SK-N-SH (cell line): ENCODE measurements at regions of chr17 and their contacts with region 1.

Region 1: GRCh38 chr17:35747540-35748017 is 5.5 kb downstream of the GAS2L2 start:
- DNase-seq: peak; percentile 89
- H3K4me3 ChIP-seq: no peak overlapping the region; a peak in 1 of 4 replicates
- H3K27ac ChIP-seq: no peak overlapping the region
- H3K4me1 ChIP-seq: peaks cover 0 to 15% of the 10 kb centered on the region in 2 experiments; a peak in 1 of 4 replicates
- H3K27me3 ChIP-seq: peaks cover 11% of the 10 kb centered on the region
- CTCF ChIP-seq: peak; percentile 83
- EP300 ChIP-seq: no peak
- RAD21 ChIP-seq: peak; percentile 98

Region 2: GRCh38 chr17:35568541-35568940 is 179.0 kb before region 1 on chr17:
- CTCF ChIA-PET with region 1: interaction called, 12 read pairs
- POLR2A ChIA-PET with region 1: no interaction called
- DNase-seq: peak; percentile 27
- H3K4me3 ChIP-seq: peak overlapping the region; percentile 67 to 82
- H3K27ac ChIP-seq: peak overlapping the region in 1 of 2 experiments; percentile 59; a peak in 2 of 4 replicates
- H3K4me1 ChIP-seq: peaks cover 0 to 10% of the 10 kb centered on the region in 2 experiments; a peak in 2 of 4 replicates
- H3K27me3 ChIP-seq: no peaks in the 10 kb centered on the region; the same call in 1 of the 2 replicates
- CTCF ChIP-seq: no peak
- EP300 ChIP-seq: no peak
- RAD21 ChIP-seq: no peak

Region 3: DNA sequence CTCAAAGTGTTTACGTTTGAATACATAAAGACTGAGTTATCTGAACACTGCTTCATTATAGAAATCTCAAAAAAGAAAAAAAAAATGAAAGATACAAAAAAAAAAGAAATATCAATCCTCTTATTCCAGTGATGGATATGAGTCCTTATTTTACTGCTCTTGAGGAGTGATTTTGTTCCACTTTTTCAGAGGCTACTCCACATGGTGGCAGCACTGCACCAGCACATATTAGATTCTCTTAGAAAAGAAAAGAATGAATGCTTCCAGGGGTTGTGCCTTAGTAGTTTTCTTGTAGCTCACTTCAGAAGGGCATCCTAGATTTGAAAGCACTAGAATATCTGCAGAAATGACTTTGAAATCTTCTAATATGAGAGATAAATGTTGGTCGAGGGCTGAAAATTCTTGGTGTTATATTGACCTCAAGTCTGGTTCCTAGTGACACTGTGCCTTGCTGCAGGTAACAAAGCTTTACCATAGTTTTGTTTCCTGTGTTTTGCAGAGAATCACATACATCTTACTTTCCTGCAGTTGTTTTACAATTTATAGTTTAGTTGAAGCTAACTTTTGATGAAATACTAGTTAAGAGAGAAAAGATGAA is 134.6 kb before region 1 on chr17:
- CTCF ChIA-PET with region 1: interaction called, 275 read pairs
- POLR2A ChIA-PET with region 1: interaction called, 7 read pairs
- DNase-seq: peak; percentile 52
- H3K4me3 ChIP-seq: no peak overlapping the region; a peak in 1 of 4 replicates
- H3K27ac ChIP-seq: no peak overlapping the region
- H3K4me1 ChIP-seq: no peaks in the 10 kb centered on the region
- H3K27me3 ChIP-seq: no peaks in the 10 kb centered on the region
- CTCF ChIP-seq: peak; percentile 85
- EP300 ChIP-seq: no peak
- RAD21 ChIP-seq: peak; percentile 75

Region 4: DNA sequence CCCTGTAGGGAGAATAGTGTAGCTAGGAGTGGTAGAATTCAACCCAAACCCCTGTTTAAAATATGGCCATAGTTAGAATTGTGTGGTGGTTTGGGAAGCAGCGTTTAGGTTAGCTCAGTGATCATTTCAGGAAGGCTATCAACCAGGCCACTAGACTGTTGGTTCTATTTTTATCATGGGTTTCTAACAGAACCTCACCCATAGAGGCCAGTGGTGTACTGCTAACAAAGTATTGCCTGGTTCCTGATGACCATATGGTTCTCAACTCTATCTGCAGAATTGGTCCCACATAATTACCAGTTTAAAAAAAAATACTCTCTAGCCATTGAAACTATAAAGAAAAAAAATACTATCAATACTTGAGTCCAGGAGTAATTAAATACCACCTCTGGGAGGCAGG is 86.7 kb before region 1 on chr17:
- CTCF ChIA-PET with region 1: interaction called, 21 read pairs
- POLR2A ChIA-PET with region 1: no interaction called
- DNase-seq: no peak
- H3K4me3 ChIP-seq: no peak overlapping the region
- H3K27ac ChIP-seq: no peak overlapping the region
- H3K4me1 ChIP-seq: no peaks in the 10 kb centered on the region
- H3K27me3 ChIP-seq: no peaks in the 10 kb centered on the region
- CTCF ChIP-seq: no peak
- EP300 ChIP-seq: no peak
- RAD21 ChIP-seq: no peak

Region 5: DNA sequence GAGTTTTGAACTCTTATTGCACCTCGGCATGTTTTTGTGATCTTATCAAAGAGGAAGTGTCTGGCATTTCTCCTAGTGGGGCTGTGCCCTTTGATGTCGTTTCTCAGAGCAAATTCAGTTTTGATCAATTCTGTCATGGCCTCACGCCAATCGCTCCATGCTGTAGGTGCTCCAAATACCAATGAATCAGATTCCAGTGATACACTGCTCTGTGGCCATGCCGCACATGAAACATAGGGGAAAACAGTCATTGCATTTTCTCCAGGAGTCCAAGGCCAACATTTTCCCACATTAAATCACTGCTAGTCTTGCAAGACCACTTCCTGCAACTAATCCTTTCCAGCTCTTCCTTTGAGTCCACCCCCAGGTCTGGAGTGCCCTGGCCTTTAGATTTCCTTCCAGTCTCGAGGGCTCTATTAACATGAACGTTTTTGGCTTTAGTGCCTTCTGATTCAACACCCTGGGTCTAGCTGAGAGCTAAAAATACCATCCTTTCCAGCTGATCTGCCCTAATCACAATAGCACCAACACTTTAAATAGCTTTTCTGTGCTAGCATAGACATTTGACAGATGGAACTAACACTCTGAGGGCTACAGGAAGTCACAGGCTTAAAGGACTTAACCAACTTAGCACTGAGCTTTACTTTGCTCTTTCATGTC is 34.4 kb before region 1 on chr17:
- CTCF ChIA-PET with region 1: interaction called, 28 read pairs
- POLR2A ChIA-PET with region 1: no interaction called
- DNase-seq: peak; percentile 39
- H3K4me3 ChIP-seq: no peak overlapping the region
- H3K27ac ChIP-seq: peak overlapping the region; percentile 79 to 93
- H3K4me1 ChIP-seq: peaks cover 25 to 37% of the 10 kb centered on the region in 2 experiments
- H3K27me3 ChIP-seq: no peaks in the 10 kb centered on the region
- CTCF ChIP-seq: no peak
- EP300 ChIP-seq: 0 out of 4 replicates have a peak, but pooled peaks of 1 of the 2 experiments have one; percentile 47
- RAD21 ChIP-seq: no peak

Region 6: DNA sequence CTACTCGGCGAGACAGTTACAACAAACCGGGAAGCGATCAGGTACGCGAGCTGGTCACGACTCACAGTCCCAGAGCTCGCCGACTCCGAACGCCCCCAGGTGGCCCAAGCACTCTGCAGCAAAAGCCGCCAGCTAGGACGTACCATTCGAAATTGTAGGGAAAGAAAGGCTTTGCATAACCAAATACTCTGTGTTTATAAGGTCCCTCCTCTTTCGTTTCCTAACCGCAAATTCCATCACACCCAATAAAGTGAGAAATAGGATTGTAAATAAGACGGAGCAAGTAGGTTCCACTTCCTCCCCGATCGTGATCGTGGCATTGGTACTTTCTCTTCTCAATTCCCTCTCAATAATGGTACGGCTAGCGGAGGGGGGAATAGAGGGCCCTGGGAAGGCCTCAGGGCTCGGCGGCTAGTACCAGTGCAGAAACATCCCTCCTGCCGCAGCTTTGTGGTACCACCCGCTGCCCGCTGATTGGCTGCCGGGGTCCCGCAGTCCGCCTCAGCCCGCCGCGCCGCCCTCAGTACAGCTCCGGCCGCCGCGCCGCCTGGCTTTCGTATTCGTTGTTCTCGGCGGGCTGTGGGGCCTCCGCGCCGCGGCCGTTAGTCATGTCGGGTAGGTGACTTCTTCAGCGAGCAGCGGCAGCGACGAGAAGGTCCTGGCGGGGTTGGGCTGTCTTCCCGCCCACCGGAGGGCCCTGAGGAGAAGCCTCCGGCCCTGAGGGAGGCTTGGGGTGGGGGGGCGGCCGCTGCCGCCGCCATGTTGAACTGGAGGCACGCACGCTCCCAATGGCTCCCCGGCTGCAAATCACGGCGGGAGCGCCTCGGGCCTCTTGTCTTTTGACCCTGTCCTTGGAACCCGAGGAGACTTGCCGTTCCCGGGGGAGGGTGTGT is 61.6 kb after region 1 on chr17 and contains the start of gene TAF15:
- CTCF ChIA-PET with region 1: interaction called, 35 read pairs
- POLR2A ChIA-PET with region 1: no interaction called
- DNase-seq: peak; percentile 95
- H3K4me3 ChIP-seq: peak within 1 kb of the TSS; percentile 77 to 80
- H3K27ac ChIP-seq: peak within 1 kb of the TSS; percentile 75 to 99
- H3K4me1 ChIP-seq: peaks cover 0 to 21% of the 10 kb centered on the region in 2 experiments; a peak in 3 of 4 replicates
- H3K27me3 ChIP-seq: no peaks in the 10 kb centered on the region
- CTCF ChIP-seq: peak; percentile 78
- EP300 ChIP-seq: peak in 1 of 2 experiments; percentile 25; a peak in 1 of 4 replicates
- RAD21 ChIP-seq: peak; percentile 52
- polyA plus RNA-seq, gene TAF15: 67.5 and 78.0 TPM in 2 replicates

Region 7: GRCh38 chr17:36048066-36048465 is 300.5 kb after region 1 on chr17:
- CTCF ChIA-PET with region 1: no interaction called
- POLR2A ChIA-PET with region 1: no interaction called
- DNase-seq: no peak
- H3K4me3 ChIP-seq: no peak overlapping the region
- H3K27ac ChIP-seq: no peak overlapping the region
- H3K4me1 ChIP-seq: no peaks in the 10 kb centered on the region
- H3K27me3 ChIP-seq: no peaks in the 10 kb centered on the region
- CTCF ChIP-seq: no peak
- EP300 ChIP-seq: no peak
- RAD21 ChIP-seq: no peak